Cardiac septum (tissue), 1 donor: ENCODE measurements at regions of chr16 and their contacts with region 1.

Region 1: GRCh38 chr16:77660311-77660710 is 62.0 kb upstream of the NUDT7 start:
- DNase-seq: no peak

Region 2: DNA sequence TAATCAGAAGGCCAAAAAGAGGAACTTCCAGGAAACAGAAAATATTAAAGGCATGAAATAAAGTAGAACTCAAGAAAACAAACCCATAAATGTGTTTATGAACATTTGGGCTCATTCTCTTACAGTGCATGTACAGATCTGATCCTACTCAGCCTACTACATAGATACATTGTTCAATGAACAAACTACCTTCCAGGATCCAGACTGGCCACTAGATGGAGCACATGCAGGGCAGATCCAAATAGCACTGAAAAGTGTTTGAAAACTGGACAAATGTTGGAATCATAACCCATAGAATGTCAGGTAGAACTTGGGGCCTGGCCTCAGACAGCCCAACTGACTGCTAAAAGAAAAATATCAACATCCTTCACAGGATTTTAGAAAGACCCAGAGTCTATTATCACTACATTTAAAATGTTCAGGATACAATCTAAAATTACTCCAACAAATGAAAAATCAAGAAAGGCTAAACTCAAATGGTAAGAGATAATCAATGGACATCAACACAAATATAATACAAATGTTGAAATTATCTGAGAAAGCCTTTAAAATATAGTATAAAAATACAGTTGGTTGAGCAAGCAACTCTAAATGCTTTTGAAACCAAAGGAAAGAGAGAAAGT is 60.4 kb before region 1 on chr16:
- intact Hi-C with region 1: loop called (anchors 5 kb)
- DNase-seq: no peak